AG04449 (cell line): ENCODE measurements at regions of chr18 and their contacts with region 1.

Region 1: DNA sequence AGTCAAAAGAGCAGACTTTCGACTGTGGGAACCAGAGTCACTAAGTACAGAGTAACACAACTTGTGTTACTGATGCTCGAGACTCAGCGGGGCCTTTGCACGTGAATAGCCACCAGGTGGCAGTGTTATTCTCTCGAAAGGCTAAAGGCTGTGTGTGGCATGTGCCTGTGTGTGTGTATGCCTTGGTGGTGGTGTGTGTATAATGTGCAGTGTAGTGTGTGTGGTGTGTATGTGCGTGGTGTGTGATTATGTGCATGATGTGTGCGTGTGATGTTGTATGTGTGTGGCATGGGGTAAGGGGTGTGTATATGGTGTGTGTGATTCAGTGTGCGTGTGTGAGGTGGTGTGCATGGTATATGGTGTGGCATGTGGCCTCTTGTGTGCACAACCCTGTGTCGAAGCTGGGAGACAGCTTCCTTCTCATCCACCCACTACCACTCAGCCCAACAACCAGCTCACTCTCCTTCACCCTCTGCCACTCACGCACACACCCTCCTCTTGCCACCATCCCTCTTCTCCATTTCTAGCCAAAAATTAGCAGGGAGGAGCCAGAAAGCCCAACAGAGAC is 83.0 kb upstream of the ZNF532 start:
- DNase-seq: no peak
- H3K4me3 ChIP-seq: no peak overlapping the region
- CTCF ChIP-seq: peak; percentile 74

Region 2: GRCh38 chr18:58015065-58015780 is 766.5 kb before region 1 on chr18:
- CTCF ChIA-PET with region 1: no interaction called
- POLR2A ChIA-PET with region 1: no interaction called
- DNase-seq: no peak
- H3K4me3 ChIP-seq: no peak overlapping the region
- CTCF ChIP-seq: no peak

Region 3: DNA sequence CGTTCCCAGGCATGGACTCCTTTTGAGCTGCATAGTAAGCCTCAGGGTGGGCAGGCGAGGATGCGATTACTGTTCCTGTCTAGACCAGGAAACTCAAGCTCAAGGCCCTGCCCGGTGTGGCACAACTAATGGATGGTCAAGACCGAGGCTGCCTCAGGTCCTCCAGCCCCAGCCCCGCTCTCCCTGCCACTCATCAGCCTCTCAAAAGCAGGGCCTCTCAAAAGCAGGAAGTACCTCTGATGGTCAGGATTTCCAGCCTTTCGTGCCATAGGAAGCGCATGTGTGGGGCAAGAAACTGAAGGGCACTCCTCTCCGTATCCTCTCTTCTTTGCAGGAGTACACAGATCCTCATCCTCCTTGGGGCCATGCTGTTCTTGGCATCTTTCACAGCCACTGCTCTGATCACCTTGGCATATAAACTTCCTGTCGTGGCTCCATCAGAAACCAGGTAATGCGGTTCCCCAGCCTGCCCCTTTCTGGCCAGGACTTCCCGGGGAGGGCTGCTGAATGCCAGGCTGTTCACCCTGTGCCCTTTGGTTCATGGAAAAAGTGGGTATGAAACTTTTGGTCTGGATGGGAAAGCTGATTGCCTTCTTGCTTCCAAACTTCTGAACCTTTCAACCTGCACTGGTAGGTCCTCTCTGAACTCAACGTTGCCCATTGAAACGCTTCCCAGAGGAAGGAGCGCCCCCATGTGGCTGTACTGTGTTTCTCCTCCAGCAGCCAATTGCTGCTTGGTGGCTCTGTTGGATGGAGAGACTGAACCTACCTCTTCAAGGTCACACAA is 275.2 kb after region 1 on chr18:
- CTCF ChIA-PET with region 1: interaction called, 1,272 read pairs
- POLR2A ChIA-PET with region 1: no interaction called
- DNase-seq: no peak
- H3K4me3 ChIP-seq: no peak overlapping the region
- CTCF ChIP-seq: peak; percentile 86

Region 4: GRCh38 chr18:59075923-59076322 is 294.2 kb after region 1 on chr18:
- CTCF ChIA-PET with region 1: interaction called, 1,272 read pairs
- POLR2A ChIA-PET with region 1: no interaction called
- DNase-seq: no peak
- H3K4me3 ChIP-seq: no peak overlapping the region
- CTCF ChIP-seq: no peak